Endothelial cell of umbilical vein (primary cell): ENCODE measurements at regions of chr14 and their contacts with region 1.

Region 1: DNA sequence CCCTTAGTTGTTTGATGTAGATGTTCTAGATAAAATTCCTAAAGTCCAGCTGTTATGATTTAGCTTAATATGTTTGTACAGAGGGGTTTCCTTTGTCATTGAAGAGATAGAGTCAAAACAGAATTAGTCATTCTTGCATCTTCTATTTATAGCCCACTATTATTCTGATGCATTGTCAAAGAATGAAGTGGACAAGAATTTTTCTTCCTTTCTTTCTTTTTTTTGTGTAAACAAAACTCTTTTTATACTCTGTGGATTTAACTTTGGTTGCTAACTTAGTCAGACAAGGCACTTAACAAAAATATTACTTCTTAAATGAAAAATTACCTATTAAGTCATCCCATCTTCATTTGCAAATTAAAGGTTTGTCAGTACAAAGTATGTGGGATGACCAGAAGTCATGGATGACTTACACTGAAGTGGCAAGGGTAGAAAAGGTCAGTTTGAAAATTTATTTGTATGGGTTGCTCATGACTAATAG is 215.6 kb upstream of the DDHD1 start:
- DNase-seq: peak; percentile 77
- H3K4me3 ChIP-seq: no peak overlapping the region
- H3K27ac ChIP-seq: peak overlapping the region; percentile 72
- H3K4me1 ChIP-seq: peaks cover 45% of the 10 kb centered on the region
- H3K27me3 ChIP-seq: no peaks in the 10 kb centered on the region
- CTCF ChIP-seq: no peak
- POLR2A ChIP-seq: no peak

Region 2: DNA sequence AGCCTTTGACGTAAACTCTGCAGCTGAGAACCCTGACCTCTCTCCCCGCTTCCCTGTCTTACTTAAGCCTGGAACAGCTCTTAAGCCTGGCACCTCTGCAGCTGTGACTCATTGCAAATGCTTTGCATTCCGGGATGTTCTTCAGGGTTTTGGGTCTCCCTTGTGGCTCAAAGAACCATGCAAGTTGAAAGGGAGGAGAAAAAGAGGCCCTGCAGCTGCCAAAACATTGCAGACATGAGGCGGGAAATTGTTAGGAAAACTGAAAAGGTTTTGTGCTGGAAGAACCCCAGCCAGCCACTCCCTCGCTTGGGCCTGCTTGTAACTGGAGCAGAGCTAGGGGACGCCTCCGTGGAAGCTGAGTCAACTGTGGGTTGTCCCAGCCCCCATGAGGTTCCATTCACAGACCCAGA is 357.7 kb before region 1 on chr14:
- CTCF ChIA-PET with region 1: no interaction called
- POLR2A ChIA-PET with region 1: no interaction called
- dilution Hi-C with region 1: no loop called
- intact Hi-C with region 1: no loop called
- DNase-seq: no peak
- H3K4me3 ChIP-seq: no peak overlapping the region
- H3K27ac ChIP-seq: no peak overlapping the region
- H3K4me1 ChIP-seq: no peaks in the 10 kb centered on the region
- H3K27me3 ChIP-seq: peaks cover 2% of the 10 kb centered on the region in 2 experiments
- CTCF ChIP-seq: no peak
- POLR2A ChIP-seq: no peak

Region 3: GRCh38 chr14:53389202-53389601 is 20.5 kb after region 1 on chr14:
- CTCF ChIA-PET with region 1: interaction called, 12 read pairs
- POLR2A ChIA-PET with region 1: no interaction called
- dilution Hi-C with region 1: no loop called
- intact Hi-C with region 1: no loop called
- DNase-seq: peak; percentile 11
- H3K4me3 ChIP-seq: no peak overlapping the region
- H3K27ac ChIP-seq: no peak overlapping the region
- H3K4me1 ChIP-seq: peaks cover 13% of the 10 kb centered on the region
- H3K27me3 ChIP-seq: no peaks in the 10 kb centered on the region
- CTCF ChIP-seq: no peak
- POLR2A ChIP-seq: no peak